Transverse colon (tissue), 4 donors: ENCODE measurements at regions of chr1 and their contacts with region 1.

Region 1: DNA sequence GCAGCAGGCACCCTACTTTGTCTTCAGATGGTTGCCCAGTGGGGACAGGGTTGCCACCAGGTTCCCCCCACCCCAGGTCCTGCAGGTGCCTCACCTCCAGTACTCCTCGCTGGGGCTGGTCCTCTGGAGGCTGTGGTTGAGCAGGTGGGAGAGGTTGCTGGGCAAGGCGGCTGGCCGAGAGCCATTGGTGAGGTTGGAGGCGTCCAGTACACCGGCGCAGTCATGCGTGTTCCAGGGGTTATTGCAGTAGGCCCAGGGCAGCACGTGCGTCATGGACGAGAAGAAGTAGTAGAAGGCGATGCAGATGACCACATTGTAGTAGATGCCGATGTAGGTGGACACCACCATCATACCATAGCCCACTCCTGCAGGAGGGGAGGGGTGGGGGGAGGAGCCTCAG is 16.9 kb downstream of the CCDC24 start:
- DNase-seq: no peak
- H3K4me3 ChIP-seq: no peak overlapping the region
- H3K27ac ChIP-seq: no peak overlapping the region
- H3K4me1 ChIP-seq: peaks cover 0 to 28% (median 10%) of the 10 kb centered on the region in 4 donors
- H3K27me3 ChIP-seq: no peaks in the 10 kb centered on the region
- CTCF ChIP-seq: no peak
- EP300 ChIP-seq: no peak
- POLR2A ChIP-seq: no peak

Region 2: DNA sequence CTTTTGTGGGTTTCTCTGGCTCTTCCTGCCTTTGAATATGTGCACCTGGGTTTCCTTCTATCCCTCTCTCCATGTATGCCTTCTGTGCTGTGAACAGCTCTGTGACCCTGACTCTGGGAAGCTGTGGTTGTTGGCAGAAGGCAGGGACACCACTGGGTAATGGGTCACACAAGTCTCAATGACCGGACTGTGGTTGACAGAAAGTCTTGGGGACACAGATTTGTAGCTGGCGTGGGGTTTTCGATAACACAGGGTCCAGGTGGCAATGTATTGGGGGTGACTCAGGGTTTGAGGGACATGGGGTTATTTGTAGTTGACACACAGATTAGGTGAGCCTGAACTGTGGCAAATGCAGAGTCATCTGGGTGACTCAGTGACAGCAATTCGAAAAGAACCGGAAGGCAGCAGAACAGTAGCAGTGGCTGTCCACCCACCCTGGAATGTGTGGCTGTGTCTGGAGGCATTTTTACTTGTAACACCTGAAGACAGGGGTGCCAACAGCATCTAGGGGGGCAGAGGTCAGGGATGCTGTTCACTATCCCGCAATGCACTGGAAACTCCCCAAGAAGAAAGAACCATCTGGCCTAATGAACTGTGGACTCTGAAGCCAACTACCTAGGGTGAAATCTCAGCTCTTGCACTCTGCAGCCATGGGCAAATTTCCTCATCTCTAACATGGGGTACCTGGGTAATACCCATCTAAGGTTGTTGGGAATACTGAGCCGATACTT is 36.0 kb after region 1 on chr1:
- in situ Hi-C with region 1: loop called in 1 of 4 experiments (anchors 5 kb)
- intact Hi-C with region 1: loop called (anchors 5 kb)
- DNase-seq: no peak
- H3K4me3 ChIP-seq: no peak overlapping the region
- H3K27ac ChIP-seq: no peak overlapping the region
- H3K4me1 ChIP-seq: peaks cover 0 to 8% (median 5%) of the 10 kb centered on the region in 4 donors
- H3K27me3 ChIP-seq: no peaks in the 10 kb centered on the region
- CTCF ChIP-seq: no peak
- EP300 ChIP-seq: no peak
- POLR2A ChIP-seq: no peak

Region 3: DNA sequence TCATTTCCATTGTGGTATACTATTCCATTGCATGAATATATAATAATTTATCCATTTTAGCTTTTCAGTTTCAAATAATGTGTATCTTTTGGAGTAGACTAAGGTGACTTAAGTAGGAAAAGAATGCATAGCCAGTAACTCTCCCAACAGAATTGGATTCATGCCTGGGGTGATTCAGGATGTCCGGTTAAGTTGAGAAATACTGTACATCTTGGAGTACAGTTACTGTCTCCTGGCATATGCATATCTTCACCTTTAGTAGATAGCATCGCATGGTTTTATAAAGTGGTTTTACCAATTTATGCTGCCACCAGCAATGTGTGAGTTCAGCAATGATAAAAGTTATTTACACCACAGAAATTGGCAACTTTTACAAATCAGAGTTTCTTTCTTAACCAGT is 41.6 kb after region 1 on chr1:
- in situ Hi-C with region 1: no loop called
- intact Hi-C with region 1: loop called (anchors 5 kb)
- DNase-seq: no peak
- H3K4me3 ChIP-seq: no peak overlapping the region
- H3K27ac ChIP-seq: peak overlapping the region in 1 of 4 donors; percentile 35
- H3K4me1 ChIP-seq: peaks cover 0 to 8% (median 5%) of the 10 kb centered on the region in 4 donors
- H3K27me3 ChIP-seq: no peaks in the 10 kb centered on the region
- CTCF ChIP-seq: no peak
- EP300 ChIP-seq: no peak
- POLR2A ChIP-seq: no peak